ENCODE measurements at regions of chr7 and their contacts with region 1.

Region 1: GRCh38 chr7:140326116-140326928 is 72.0 kb downstream of the SLC37A3 start:
- DNase-seq: peak; percentile 85
- H3K4me3 ChIP-seq: no peak overlapping the region
- H3K27ac ChIP-seq: peak overlapping the region; percentile 72
- H3K4me1 ChIP-seq: no peaks in the 10 kb centered on the region
- H3K27me3 ChIP-seq: no peaks in the 10 kb centered on the region
- CTCF ChIP-seq: peak; percentile 39

Region 2: DNA sequence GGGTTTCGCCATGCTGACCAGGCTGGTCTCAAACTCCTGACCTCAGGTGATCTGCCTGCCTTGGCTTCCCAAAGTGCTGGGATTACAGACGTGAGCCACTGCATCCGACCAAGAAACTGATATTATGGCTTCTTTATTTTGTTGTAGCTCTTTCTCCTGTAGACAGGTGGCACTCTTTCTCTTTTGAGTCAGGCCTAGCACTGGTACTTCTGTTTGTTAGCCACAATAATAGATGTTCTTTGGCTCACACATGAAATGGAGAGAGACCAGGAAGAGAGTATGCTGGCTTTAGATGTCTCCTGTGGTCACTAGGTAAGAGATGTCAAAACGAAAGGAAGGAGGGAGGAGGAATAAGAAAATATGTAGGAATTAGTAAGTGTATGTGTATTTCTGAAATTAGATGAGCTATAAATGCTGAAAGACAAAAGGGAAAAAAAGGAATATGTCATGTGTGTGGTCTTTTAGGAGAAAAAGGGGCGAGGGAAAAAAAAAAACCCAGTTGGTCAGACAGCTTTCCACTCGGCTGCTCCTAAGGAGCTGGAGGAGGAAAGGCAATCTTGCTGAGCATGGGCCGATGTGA is 724.1 kb before region 1 on chr7:
- intact Hi-C with region 1: no loop called
- DNase-seq: no peak
- H3K4me3 ChIP-seq: no peak overlapping the region
- H3K27ac ChIP-seq: no peak overlapping the region
- H3K4me1 ChIP-seq: no peaks in the 10 kb centered on the region
- H3K27me3 ChIP-seq: no peaks in the 10 kb centered on the region
- CTCF ChIP-seq: peak; percentile 30

Region 3: GRCh38 chr7:140175221-140176121 is 150.9 kb before region 1 on chr7:
- intact Hi-C with region 1: loop called (anchors 5 kb)
- DNase-seq: peak; percentile 92
- H3K4me3 ChIP-seq: peak overlapping the region; percentile 92
- H3K27ac ChIP-seq: peak overlapping the region; percentile 100
- H3K4me1 ChIP-seq: peaks cover 8% of the 10 kb centered on the region
- H3K27me3 ChIP-seq: no peaks in the 10 kb centered on the region
- CTCF ChIP-seq: peak; percentile 53